Psoas muscle (tissue), 8 donors: ENCODE measurements at regions of chr22 and their contacts with region 1.

Region 1: GRCh38 chr22:38051900-38052862 is 5.0 kb upstream of the PICK1 start:
- DNase-seq: peak; percentile 77 to 90
- ATAC-seq: peak; percentile 77 to 84 (median 82)
- H3K4me3 ChIP-seq: no peak overlapping the region
- H3K27ac ChIP-seq: no peak overlapping the region
- H3K4me1 ChIP-seq: peaks cover 3% of the 10 kb centered on the region
- H3K27me3 ChIP-seq: no peaks in the 10 kb centered on the region
- CTCF ChIP-seq: peak; percentile 89

Region 2: DNA sequence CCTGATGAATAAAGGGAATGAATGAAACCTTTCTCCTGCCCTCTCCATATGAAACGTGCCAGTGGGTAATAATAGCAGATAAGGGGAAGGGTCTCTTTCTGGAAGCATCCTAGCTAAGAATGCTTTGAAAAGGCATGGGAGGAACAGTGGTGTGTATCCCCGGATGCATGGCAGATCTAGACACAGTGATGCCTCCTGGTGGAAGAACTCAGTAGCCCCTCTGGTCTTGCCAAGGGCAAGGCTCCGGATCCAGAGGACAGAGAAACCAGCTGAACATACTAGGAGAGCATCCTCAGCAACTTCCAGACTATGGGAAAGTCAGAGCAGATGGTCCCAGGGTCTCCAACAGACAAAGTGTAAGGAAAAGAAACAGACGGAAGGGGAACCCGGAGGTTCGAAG is 51.9 kb after region 1 on chr22:
- intact Hi-C with region 1: loop called (anchors 2 kb)
- DNase-seq: peak in 1 of 2 donors; percentile 54
- ATAC-seq: peak; percentile 72 to 88 (median 77)
- H3K4me3 ChIP-seq: no peak overlapping the region
- H3K27ac ChIP-seq: no peak overlapping the region
- H3K4me1 ChIP-seq: no peaks in the 10 kb centered on the region
- H3K27me3 ChIP-seq: no peaks in the 10 kb centered on the region
- CTCF ChIP-seq: peak; percentile 47